Heart right ventricle (tissue), 16 donors: ENCODE measurements at regions of chr7 and their contacts with region 1.

Region 1: GRCh38 chr7:22854158-22855048 is 31.8 kb upstream of the TOMM7 start:
- DNase-seq: peak; percentile 88 to 89
- ATAC-seq: peak; percentile 84 to 97 (median 88)
- H3K4me3 ChIP-seq: peak overlapping the region; percentile 61 to 87 (median 74)
- H3K27ac ChIP-seq: peak overlapping the region; percentile 90 to 99 (median 95)
- H3K4me1 ChIP-seq: peaks cover 0 to 45% (median 36%) of the 10 kb centered on the region in 9 donors
- H3K27me3 ChIP-seq: no peaks in the 10 kb centered on the region
- CTCF ChIP-seq: peak in 8 of 9 donors; percentile 5 to 97 (median 94)

Region 2: DNA sequence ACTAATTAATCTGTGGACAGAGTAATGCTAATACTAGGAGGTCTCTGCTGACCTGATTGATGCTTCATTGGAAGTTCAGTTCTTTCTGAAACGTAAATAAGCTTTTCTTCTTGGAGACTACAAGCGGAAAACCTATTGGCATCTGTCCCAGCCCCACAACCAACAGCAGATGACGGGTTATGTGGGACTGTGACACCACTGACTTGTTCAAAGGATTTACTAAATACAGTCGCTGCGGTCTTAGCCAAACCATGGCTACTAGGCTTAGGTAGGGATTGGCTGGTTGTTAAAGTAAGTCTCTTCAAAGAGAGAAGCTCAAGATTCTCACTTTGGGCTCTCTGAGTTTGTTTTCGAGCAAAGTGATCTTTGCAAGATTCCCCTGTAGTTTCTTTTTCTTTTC is 91.2 kb after region 1 on chr7:
- intact Hi-C with region 1: loop called in 3 of 10 experiments (anchors 5 to 10 kb)
- DNase-seq: peak in 1 of 2 donors; percentile 14
- ATAC-seq: no peak
- H3K4me3 ChIP-seq: no peak overlapping the region
- H3K27ac ChIP-seq: no peak overlapping the region
- H3K4me1 ChIP-seq: peaks cover 0 to 9% (median 5%) of the 10 kb centered on the region in 9 donors
- H3K27me3 ChIP-seq: no peaks in the 10 kb centered on the region
- CTCF ChIP-seq: no peak

Region 3: DNA sequence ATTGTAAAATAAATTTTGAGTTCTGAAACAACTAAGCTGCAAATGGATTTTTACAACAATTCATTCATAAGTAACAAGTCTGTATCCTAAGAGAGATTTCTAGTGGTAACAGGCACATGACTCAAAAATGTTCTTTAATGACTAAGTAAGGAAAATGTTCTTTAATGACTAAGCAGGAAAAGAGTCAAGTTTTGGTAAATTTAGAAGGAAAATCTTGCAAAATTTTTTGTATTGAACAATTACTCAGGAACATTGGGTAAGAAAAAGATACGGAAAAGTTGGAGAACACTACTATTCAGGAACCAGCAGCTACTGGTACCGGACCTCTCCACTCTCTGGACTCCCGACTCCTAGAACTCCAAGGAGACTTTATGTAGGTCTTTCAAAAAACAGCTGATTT is 126.0 kb after region 1 on chr7:
- intact Hi-C with region 1: no loop called
- DNase-seq: no peak
- ATAC-seq: peak in 1 of 8 donors; percentile 62
- H3K4me3 ChIP-seq: no peak overlapping the region
- H3K27ac ChIP-seq: peak overlapping the region in 1 of 10 donors; percentile 10
- H3K4me1 ChIP-seq: peaks cover 0 to 11% (median 0%) of the 10 kb centered on the region in 9 donors
- H3K27me3 ChIP-seq: no peaks in the 10 kb centered on the region
- CTCF ChIP-seq: no peak

Region 4: GRCh38 chr7:23013715-23014649 is 159.6 kb after region 1 on chr7 and contains the start of gene HYCC1:
- intact Hi-C with region 1: loop called in 8 of 10 experiments (anchors 1 to 10 kb)
- DNase-seq: peak; percentile 98 to 99
- ATAC-seq: peak; percentile 99 to 100 (median 100)
- H3K4me3 ChIP-seq: peak within 1 kb of the TSS; percentile 60 to 96 (median 84)
- H3K27ac ChIP-seq: peak within 1 kb of the TSS; percentile 19 to 93 (median 86)
- H3K4me1 ChIP-seq: peaks cover 0 to 57% (median 38%) of the 10 kb centered on the region in 9 donors
- H3K27me3 ChIP-seq: no peaks in the 10 kb centered on the region
- CTCF ChIP-seq: peak; percentile 38 to 75 (median 67)
- total RNA-seq, gene HYCC1: 26.2 to 39.6 (median 34.5) TPM